ENCODE measurements at regions of chr22 and their contacts with region 1.

Region 1: DNA sequence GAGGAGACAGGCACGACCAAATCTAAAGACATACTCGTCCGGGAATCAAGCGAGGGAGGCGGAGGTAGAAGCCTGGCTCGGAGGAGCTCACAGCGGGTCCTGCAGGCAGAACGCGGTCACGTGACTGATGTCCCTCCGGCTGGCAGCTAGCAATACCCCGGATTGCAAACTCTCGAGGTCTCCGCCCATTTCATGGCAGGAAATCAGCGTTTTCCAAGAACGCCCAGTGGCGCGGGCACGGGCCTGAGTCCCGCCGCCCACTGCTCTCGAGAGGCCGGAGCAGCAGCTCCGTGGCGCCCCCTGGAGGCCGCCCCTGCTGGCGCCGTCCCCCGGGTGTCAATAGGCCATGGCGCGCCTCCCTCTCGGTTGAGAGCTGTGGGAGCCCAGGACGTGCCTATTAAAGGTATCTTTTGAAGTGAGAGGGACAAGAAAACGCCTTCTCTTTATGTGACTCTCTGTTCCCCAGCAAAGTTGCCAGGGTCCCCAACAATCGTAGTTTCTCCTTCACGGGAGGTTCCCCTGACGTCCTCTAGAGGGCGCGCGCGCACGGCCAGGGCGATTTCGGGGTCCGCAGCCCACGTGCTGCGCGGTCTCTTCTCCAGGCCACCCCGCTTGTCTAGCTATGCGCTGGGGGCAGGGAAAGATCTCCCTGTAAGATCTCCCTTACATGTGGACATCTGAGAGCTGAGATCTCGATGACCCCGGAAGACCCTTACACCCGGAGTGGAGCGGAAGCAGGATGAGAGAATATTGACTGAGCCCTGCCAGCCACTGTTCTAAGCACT is 37.3 kb upstream of the RBFOX2 start:
- DNase-seq: peak; percentile 72
- H3K27ac ChIP-seq: peak overlapping the region; percentile 62
- CTCF ChIP-seq: peak; percentile 99

Region 2: GRCh38 chr22:35930933-35931332 is 135.0 kb before region 1 on chr22:
- CTCF ChIA-PET with region 1: interaction called, 17 read pairs
- POLR2A ChIA-PET with region 1: interaction called, 6 read pairs
- DNase-seq: peak; percentile 34
- H3K27ac ChIP-seq: no peak overlapping the region
- CTCF ChIP-seq: peak; percentile 46

Region 3: GRCh38 chr22:36028646-36029405 is 37.1 kb before region 1 on chr22 and contains the start of gene RBFOX2:
- CTCF ChIA-PET with region 1: interaction called, 13 read pairs
- POLR2A ChIA-PET with region 1: interaction called, 5 read pairs
- DNase-seq: peak; percentile 94
- H3K27ac ChIP-seq: peak within 1 kb of the TSS; percentile 89
- CTCF ChIP-seq: no peak

Region 4: DNA sequence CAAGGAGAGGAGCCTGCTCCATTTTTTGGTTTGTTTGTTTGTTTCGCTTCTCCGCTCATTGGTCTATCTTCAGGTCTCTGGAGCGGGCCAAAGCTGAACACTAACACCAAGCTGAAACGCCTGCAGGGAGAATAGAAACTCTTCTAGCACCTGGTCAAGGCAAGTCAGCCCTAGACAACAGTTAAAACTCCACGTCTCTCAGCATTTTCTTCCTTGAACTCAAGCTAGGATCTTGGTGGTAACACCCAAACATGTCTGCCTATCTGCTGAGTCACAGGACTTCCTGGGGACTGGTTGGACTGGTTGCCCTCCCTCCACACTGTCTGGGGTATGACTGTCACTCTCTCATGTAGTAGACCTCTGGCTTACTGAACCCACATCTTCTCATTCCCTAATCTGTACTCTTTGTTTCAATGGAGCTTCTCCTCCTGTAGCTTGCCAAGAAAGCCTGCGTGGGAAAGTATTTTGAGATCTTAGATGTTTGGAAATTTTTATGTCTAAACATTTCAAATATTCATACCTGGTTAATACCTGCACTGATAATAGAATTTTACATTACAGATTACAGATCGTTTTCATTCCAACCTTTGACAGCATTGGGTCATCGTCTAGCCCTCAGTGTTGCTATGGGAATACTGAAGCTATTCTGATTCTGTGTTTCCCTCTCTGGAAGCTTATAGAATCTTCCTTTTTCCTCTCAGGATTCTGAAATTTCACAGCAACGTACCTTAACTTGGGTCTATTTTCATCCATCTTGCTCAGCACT is 13.3 kb before region 1 on chr22:
- CTCF ChIA-PET with region 1: interaction called, 12 read pairs
- POLR2A ChIA-PET with region 1: no interaction called
- DNase-seq: peak; percentile 71
- H3K27ac ChIP-seq: peak overlapping the region; percentile 40; the same call in 1 of the 2 replicates
- CTCF ChIP-seq: no peak

Region 5: GRCh38 chr22:36077271-36077670 is 11.3 kb after region 1 on chr22:
- CTCF ChIA-PET with region 1: interaction called, 20 read pairs
- POLR2A ChIA-PET with region 1: no interaction called
- DNase-seq: no peak
- H3K27ac ChIP-seq: no peak overlapping the region
- CTCF ChIP-seq: no peak

Region 6: DNA sequence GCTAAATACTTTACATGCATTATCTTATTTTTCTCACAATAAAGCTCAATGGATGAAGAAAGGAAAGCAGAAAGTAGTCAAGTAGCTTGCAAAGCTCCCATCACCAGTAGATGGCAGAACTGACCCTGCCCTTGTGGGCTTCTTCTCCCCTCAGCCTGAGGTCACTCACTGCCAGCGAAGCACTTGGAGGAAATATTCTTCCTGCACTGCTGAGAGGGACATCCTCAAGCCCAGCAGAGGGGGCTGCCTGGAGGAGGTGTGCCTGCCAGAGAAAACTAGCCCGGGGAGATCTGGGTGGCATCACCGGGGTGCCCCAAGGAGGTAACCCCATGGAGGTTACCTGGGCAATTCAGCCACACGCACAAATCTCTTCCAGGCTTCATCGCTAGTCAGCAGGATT is 129.0 kb after region 1 on chr22:
- CTCF ChIA-PET with region 1: no interaction called
- POLR2A ChIA-PET with region 1: no interaction called
- DNase-seq: no peak
- H3K27ac ChIP-seq: no peak overlapping the region
- CTCF ChIP-seq: peak; percentile 51